ENCODE measurements at regions of chr3 and their contacts with region 1.

Region 1: GRCh38 chr3:48739955-48740823 is 23.2 kb upstream of the IP6K2 start:
- DNase-seq: peak; percentile 88 to 94 (median 92)
- H3K4me3 ChIP-seq: peak overlapping the region in 43 of 59 donors; percentile 0 to 46 (median 21)
- H3K27ac ChIP-seq: peak overlapping the region; percentile 42 to 100 (median 94)
- H3K27me3 ChIP-seq: no peaks in the 10 kb centered on the region
- CTCF ChIP-seq: peak; percentile 53 to 93 (median 85)

Region 2: DNA sequence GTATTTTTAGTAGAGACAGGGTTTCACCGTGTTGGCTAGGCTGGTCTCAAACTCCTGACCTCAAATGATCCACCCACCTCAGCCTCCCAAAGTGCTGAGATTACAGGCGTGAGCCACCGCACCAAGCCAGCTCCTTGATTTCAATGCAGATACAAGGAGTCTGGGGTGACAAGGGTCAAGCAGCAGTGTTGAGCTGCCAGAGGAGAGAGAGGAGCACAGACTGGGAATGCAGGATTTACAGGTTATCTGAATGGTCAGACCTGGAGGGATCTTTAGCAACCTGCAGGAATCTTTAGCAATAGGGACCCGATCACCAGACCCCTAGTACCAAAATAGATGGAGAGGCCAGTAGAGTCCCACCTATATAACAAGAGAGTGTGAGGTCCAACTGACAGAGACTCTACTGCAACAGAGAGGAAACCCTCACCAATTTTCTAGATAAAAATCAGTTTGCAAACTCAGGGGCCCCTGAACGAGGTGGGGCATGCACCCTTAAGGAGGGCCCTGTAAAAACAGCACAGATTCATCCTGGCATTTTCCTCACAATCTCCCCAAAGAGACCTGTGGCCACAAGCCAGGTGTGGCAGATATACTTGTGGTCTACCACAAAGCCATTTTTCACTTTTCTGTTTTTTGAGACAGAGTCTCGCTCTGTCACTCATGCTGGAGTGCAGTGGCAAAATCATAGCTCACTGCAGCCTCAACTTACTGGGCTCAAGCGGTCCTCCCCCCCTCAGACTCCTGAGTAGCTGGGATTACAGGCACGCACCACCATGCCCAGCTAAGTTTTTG is 225.6 kb before region 1 on chr3:
- intact Hi-C with region 1: no loop called
- DNase-seq: no peak
- H3K4me3 ChIP-seq: no peak overlapping the region
- H3K27ac ChIP-seq: no peak overlapping the region
- H3K27me3 ChIP-seq: no peaks in the 10 kb centered on the region
- CTCF ChIP-seq: no peak

Region 3: DNA sequence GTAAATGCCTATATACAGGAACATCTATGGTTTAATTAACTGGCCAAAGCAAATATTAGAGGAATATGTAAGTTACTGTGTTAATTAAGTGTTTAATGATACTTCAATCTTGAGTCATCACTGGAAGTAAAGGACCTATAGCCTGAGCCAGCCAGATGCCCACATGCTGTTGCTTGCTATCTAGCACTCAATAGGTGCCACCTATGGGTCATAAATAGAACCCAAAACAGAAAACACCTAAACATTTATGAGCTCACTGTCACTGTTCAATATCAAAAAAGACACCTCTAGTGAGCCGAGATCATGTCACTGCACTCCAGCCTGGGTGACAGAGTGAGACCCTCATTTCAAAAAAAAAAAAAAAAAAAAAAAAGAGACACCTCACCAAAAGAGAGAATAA is 25.2 kb after region 1 on chr3:
- intact Hi-C with region 1: loop called in 1 of 2 experiments (anchors 2 kb)
- DNase-seq: peak in 1 of 10 donors; percentile 53
- H3K4me3 ChIP-seq: no peak overlapping the region
- H3K27ac ChIP-seq: peak overlapping the region in 20 of 59 donors; percentile 1 to 77 (median 38)
- H3K27me3 ChIP-seq: no peaks in the 10 kb centered on the region
- CTCF ChIP-seq: peak in 44 of 56 donors; percentile 14 to 67 (median 39)